Natural killer cell (primary cell): ENCODE measurements at regions of chr19 and their contacts with region 1.

Region 1: GRCh38 chr19:771332-771785 is 20.4 kb downstream of the MISP start:
- DNase-seq: peak in 1 of 2 donors; percentile 55
- ATAC-seq: peak in 2 of 3 donors; percentile 50 to 55
- H3K4me3 ChIP-seq: no peak overlapping the region
- H3K4me3 Mint-ChIP-seq: no peak overlapping the region
- H3K27ac ChIP-seq: no peak overlapping the region
- H3K27ac Mint-ChIP-seq: no peak overlapping the region
- H3K4me1 ChIP-seq: peaks cover 6% of the 10 kb centered on the region
- H3K4me1 Mint-ChIP-seq: no peaks in the 10 kb centered on the region
- H3K27me3 ChIP-seq: peaks cover 2% of the 10 kb centered on the region
- H3K27me3 Mint-ChIP-seq: peaks cover 0 to 2% of the 10 kb centered on the region in 2 donors
- CTCF ChIP-seq: no peak

Region 2: GRCh38 chr19:633068-633785 is 138.1 kb before region 1 on chr19 and contains the start of gene POLRMT:
- intact Hi-C with region 1: no loop called
- DNase-seq: peak; percentile 86 to 99
- ATAC-seq: peak; percentile 94 to 96 (median 95)
- H3K4me3 ChIP-seq: peak within 1 kb of the TSS; percentile 77
- H3K4me3 Mint-ChIP-seq: peak within 1 kb of the TSS; percentile 82
- H3K27ac ChIP-seq: peak within 1 kb of the TSS; percentile 79
- H3K27ac Mint-ChIP-seq: peak within 1 kb of the TSS; percentile 87 to 95
- H3K4me1 ChIP-seq: peaks cover 25% of the 10 kb centered on the region
- H3K4me1 Mint-ChIP-seq: peaks cover 9 to 26% of the 10 kb centered on the region in 2 donors
- H3K27me3 ChIP-seq: no peaks in the 10 kb centered on the region
- H3K27me3 Mint-ChIP-seq: no peaks in the 10 kb centered on the region
- CTCF ChIP-seq: no peak
- total RNA-seq, gene POLRMT: 57.2 to 58.5 (median 57.6) TPM

Region 3: DNA sequence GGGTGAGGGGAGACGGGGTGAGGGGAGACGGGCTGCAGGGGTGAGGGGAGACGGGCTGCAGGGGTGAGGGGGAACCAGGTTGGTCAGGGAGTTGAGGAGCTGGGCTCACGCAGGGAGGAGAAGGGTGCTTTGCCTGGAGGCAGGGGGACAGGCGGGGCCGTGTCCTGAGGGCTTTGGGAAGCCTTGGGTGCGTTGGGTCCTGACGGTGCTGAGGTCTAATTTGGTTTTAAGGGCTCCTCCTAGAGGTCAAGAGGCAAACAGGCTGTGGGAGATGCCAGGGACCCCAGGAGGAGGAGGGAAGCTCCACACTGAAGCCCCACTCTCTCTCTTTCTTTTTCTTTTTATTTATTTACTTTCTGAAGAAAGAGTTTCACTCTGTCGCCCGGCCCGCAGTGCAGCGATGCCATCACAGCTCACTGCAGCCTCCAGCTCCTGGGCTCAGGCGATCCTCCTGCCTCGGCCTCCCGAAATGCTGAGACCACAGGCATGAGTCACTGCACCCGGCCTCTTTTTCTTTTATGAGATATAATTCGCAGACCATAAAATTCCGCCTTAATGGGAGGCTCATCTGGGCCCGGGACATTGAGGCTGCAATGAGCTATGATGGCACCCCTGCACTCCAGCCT is 29.7 kb before region 1 on chr19:
- intact Hi-C with region 1: no loop called
- DNase-seq: peak in 1 of 2 donors; percentile 39
- ATAC-seq: peak in 2 of 3 donors; percentile 34 to 52
- H3K4me3 ChIP-seq: no peak overlapping the region
- H3K4me3 Mint-ChIP-seq: no peak overlapping the region
- H3K27ac ChIP-seq: no peak overlapping the region
- H3K27ac Mint-ChIP-seq: no peak overlapping the region
- H3K4me1 ChIP-seq: no peaks in the 10 kb centered on the region
- H3K4me1 Mint-ChIP-seq: peaks cover 0 to 7% of the 10 kb centered on the region in 2 donors
- H3K27me3 ChIP-seq: no peaks in the 10 kb centered on the region
- H3K27me3 Mint-ChIP-seq: no peaks in the 10 kb centered on the region
- CTCF ChIP-seq: no peak

Region 4: DNA sequence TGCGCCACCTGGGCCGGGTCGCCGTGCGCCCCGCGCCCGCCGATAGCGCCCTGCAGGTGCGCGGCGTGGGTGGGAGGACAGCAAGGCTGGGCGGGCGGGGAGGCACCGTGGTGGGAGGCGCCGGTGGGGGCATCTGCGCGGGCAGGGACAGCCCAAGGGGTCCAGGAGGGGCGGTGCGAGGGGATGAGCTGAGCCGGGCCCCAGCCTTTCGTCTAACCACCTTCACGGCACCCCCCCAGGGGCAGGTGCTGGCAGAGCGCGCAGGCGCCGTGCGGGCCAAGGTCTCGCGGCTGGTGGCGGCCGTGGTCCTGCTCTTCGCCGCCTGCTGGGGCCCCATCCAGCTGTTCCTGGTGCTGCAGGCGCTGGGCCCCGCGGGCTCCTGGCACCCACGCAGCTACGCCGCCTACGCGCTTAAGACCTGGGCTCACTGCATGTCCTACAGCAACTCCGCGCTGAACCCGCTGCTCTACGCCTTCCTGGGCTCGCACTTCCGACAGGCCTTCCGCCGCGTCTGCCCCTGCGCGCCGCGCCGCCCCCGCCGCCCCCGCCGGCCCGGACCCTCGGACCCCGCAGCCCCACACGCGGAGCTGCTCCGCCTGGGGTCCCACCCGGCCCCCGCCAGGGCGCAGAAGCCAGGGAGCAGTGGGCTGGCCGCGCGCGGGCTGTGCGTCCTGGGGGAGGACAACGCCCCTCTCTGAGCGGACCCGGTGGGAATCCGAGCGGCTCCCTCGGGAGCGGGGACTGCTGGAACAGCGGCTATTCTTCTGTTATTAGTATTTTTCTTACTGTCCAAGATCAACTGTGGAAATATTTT is 148.9 kb after region 1 on chr19:
- intact Hi-C with region 1: loop called (anchors 2 kb)
- DNase-seq: peak; percentile 47 to 84
- ATAC-seq: peak; percentile 11 to 31 (median 14)
- H3K4me3 ChIP-seq: peak overlapping the region; percentile 25
- H3K4me3 Mint-ChIP-seq: peak overlapping the region; percentile 86
- H3K27ac ChIP-seq: no peak overlapping the region
- H3K27ac Mint-ChIP-seq: peak overlapping the region in 1 of 2 donors; percentile 21
- H3K4me1 ChIP-seq: peaks cover 57% of the 10 kb centered on the region
- H3K4me1 Mint-ChIP-seq: peaks cover 10 to 14% of the 10 kb centered on the region in 2 donors
- H3K27me3 ChIP-seq: peaks cover 21% of the 10 kb centered on the region
- H3K27me3 Mint-ChIP-seq: peaks cover 0 to 5% of the 10 kb centered on the region in 2 donors
- CTCF ChIP-seq: no peak

Region 5: DNA sequence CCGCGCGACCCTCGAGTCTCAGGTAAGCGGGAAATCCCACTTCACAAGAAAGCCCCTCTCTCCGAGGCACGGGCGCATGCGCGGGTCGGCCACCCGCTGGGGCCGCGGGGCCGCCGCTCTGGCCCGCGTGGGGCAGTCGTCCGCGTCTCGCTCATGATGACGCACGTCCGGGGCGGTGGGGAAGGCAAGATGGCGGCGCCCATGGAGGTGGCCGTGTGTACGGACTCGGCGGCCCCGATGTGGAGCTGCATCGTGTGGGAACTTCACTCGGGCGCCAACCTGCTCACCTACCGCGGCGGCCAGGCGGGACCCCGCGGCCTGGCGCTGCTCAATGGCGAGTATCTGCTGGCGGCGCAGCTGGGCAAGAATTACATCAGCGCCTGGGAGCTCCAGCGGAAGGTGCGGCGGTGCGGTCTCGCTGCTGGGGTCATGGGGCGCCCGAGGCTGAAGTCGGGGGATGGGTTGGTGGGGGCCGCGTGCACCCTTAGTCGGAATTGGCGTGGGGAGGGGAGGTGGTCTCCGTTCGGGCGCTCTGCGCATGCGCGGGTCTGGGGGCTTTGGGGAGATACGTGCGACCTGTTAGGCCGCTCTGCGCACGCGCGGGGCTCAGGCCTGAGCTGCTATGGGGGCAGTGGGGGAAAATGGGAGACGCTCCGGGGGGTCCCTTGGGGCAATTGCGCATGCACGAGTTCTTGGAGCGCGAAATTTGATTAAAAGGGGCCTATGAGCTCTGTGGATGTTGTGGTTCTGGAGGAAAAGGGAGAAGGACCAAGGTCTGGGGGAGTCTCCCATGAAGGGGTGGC is 213.0 kb after region 1 on chr19 and contains the start of gene WDR18:
- intact Hi-C with region 1: loop called (anchors 10 kb)
- DNase-seq: peak; percentile 90 to 94
- ATAC-seq: peak; percentile 92 to 94 (median 93)
- H3K4me3 ChIP-seq: peak within 1 kb of the TSS; percentile 97
- H3K4me3 Mint-ChIP-seq: peak within 1 kb of the TSS; percentile 97
- H3K27ac ChIP-seq: peak within 1 kb of the TSS; percentile 88
- H3K27ac Mint-ChIP-seq: peak within 1 kb of the TSS; percentile 83 to 94
- H3K4me1 ChIP-seq: peaks cover 39% of the 10 kb centered on the region
- H3K4me1 Mint-ChIP-seq: peaks cover 13 to 22% of the 10 kb centered on the region in 2 donors
- H3K27me3 ChIP-seq: no peaks in the 10 kb centered on the region
- H3K27me3 Mint-ChIP-seq: no peaks in the 10 kb centered on the region
- CTCF ChIP-seq: no peak
- total RNA-seq, gene WDR18: 17.5 to 25.4 (median 22.7) TPM